Motor neuron (in vitro differentiated cells): ENCODE measurements at regions of chr3 and their contacts with region 1.

Region 1: GRCh38 chr3:42101048-42101447 is 9.9 kb downstream of the TRAK1 start:
- ATAC-seq: peak in 3 of 8 experiments; percentile 74 to 89 (median 86)
- H3K4me3 ChIP-seq: no peak overlapping the region
- H3K27ac ChIP-seq: no peak overlapping the region
- H3K4me1 ChIP-seq: peaks cover 27 to 31% of the 10 kb centered on the region in 2 donors

Region 2: DNA sequence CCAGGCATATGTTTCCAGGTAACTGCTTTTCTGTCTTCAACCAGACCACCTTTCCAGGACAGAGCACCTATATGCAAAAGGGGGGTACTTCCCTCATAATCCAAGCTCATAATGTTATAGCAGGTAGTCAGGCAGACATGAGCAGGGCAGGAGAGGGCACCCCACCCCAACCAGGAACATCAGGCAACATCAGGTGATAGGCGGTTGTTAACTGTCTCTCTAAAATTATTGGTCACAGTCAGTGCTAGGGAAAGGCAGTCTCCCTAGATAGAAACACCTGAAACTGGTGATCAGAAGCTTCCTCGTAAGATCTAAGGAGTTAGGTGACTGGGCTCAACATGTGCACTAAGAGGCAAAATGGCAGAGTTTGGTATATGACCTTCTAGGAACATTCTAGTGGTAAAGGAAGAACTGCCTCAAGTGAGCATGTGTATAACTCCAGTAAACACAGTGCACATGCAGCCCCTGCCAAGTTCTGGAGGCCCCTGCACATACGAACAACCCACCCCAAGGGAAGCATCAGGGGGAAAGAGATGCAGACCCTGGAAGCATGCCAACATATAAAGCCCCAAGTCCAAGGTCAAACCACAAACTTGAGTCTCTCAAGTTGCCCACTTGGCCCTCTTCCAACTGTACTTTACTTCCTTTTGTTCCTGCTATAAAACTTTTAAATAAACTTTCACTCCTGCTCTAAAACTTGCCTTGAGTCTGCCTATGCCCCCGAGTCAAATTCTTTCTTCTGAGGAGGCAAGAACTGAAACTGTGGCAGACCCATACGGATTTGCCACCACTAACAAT is 410.1 kb before region 1 on chr3:
- in situ Hi-C with region 1: no loop called
- ATAC-seq: no peak
- H3K4me3 ChIP-seq: no peak overlapping the region
- H3K27ac ChIP-seq: no peak overlapping the region
- H3K4me1 ChIP-seq: no peaks in the 10 kb centered on the region

Region 3: GRCh38 chr3:41893977-41894376 is 207.1 kb before region 1 on chr3:
- in situ Hi-C with region 1: loop called in 1 of 9 experiments (anchors 10 kb)
- ATAC-seq: peak in 1 of 8 experiments; percentile 36
- H3K4me3 ChIP-seq: no peak overlapping the region
- H3K27ac ChIP-seq: no peak overlapping the region
- H3K4me1 ChIP-seq: no peaks in the 10 kb centered on the region

Region 4: GRCh38 chr3:41955192-41955591 is 145.9 kb before region 1 on chr3:
- in situ Hi-C with region 1: no loop called
- ATAC-seq: no peak
- H3K4me3 ChIP-seq: no peak overlapping the region
- H3K27ac ChIP-seq: no peak overlapping the region
- H3K4me1 ChIP-seq: no peaks in the 10 kb centered on the region